Prostate gland (tissue), 2 donors: ENCODE measurements at regions of chr6 and their contacts with region 1.

Region 1: DNA sequence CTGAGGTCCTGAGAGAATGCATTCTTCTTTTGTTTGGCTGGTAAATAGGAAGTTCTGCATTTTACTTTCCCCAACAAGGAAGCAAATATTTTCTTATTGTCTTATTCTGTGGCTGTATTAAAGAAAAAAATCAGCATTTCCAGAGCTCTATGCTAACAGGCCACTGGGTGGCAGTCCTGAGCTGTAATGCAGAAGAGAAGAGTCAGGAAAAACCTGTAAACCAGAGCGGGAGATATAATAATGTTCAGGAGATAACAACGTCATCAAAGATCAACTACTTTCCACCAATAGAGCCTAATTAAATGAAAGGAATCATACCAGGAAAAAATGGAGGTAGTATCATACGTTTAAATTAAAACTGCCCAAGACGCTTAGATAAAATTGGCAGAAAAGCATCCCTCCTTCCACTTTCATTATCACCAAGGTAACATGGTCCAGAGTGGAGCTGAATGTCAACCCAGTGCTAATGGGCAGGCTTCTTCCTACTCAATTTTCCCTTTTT is 55.6 kb upstream of the CARMIL1 start:
- DNase-seq: peak; percentile 42
- H3K4me3 ChIP-seq: no peak overlapping the region
- H3K27ac ChIP-seq: no peak overlapping the region
- H3K4me1 ChIP-seq: no peaks in the 10 kb centered on the region
- H3K27me3 ChIP-seq: no peaks in the 10 kb centered on the region
- CTCF ChIP-seq: peak; percentile 70 to 85 (median 80)
- POLR2A ChIP-seq: no peak

Region 2: GRCh38 chr6:25050356-25050755 is 173.2 kb before region 1 on chr6:
- intact Hi-C with region 1: no loop called
- DNase-seq: no peak
- H3K4me3 ChIP-seq: no peak overlapping the region
- H3K27ac ChIP-seq: no peak overlapping the region
- H3K4me1 ChIP-seq: peaks cover 5% of the 10 kb centered on the region
- H3K27me3 ChIP-seq: no peaks in the 10 kb centered on the region
- CTCF ChIP-seq: no peak
- POLR2A ChIP-seq: no peak

Region 3: DNA sequence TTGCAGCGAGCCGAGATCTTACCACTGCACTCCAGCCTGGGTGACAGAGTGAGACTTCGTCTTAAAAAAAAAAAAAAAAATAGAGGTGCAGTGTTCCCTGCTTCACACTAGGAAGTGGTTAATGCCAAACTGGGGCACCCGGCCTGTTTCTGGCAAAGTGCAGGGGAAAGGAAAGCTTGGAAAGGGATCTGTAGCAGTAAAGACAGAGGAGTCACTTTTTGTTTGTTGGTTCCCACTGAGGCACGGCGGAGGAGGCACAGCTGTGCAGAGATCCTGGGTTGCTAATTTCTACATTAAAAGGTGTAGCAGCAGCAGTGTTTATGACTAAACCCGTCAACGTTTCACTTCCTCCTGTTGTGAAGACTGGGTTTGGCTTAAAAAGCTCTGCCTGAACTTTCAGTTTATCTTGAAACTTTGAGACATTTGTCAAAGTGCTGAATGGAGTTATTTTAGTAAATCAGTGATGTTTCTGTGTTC is 181.2 kb after region 1 on chr6:
- intact Hi-C with region 1: no loop called
- DNase-seq: no peak
- H3K4me3 ChIP-seq: no peak overlapping the region
- H3K27ac ChIP-seq: no peak overlapping the region
- H3K4me1 ChIP-seq: no peaks in the 10 kb centered on the region
- H3K27me3 ChIP-seq: no peaks in the 10 kb centered on the region
- CTCF ChIP-seq: no peak
- POLR2A ChIP-seq: no peak

Region 4: DNA sequence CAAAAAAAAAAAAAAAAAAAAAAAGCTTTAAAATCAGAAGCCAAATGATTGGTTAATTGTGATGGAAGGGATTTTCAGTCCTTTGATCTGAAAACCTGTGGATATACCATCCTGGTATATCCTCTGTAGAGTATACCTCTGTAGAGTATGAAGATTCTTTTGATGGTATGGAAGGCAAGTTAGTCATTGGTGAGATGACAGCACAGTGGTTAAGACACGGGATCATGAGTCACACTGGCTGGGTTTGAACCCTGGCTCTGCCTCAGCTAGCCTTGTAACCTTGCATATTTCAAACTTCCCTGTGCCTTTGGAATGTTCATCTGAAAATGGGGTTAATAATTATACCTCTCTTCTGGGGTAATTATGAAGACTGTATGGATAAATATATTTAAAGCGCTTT is 234.9 kb after region 1 on chr6:
- intact Hi-C with region 1: no loop called
- DNase-seq: no peak
- H3K4me3 ChIP-seq: no peak overlapping the region
- H3K27ac ChIP-seq: no peak overlapping the region
- H3K4me1 ChIP-seq: no peaks in the 10 kb centered on the region
- H3K27me3 ChIP-seq: no peaks in the 10 kb centered on the region
- CTCF ChIP-seq: no peak
- POLR2A ChIP-seq: no peak

Region 5: DNA sequence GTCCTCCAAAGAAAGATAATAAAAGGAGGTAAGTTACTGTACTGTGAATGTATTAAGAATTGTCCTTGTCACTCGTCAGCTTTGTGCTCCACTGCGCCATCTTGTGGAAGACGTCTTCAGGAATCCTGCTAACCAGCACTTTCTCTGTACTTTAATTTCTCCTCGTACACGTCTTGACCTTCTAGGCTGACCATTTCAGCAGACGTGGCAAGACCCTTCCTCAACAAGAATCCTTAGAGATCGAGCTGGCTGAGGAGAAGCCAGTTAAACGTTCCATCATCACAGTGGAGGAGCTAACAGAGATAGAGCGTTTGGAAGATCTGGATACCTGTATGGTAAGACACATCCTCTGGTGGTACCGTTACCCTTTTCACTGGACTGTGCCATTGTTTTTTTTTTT is 333.0 kb after region 1 on chr6:
- intact Hi-C with region 1: loop called (anchors 5 kb)
- DNase-seq: peak; percentile 70
- H3K4me3 ChIP-seq: no peak overlapping the region
- H3K27ac ChIP-seq: no peak overlapping the region
- H3K4me1 ChIP-seq: no peaks in the 10 kb centered on the region
- H3K27me3 ChIP-seq: no peaks in the 10 kb centered on the region
- CTCF ChIP-seq: peak; percentile 39 to 75 (median 64)
- POLR2A ChIP-seq: no peak

Region 6: DNA sequence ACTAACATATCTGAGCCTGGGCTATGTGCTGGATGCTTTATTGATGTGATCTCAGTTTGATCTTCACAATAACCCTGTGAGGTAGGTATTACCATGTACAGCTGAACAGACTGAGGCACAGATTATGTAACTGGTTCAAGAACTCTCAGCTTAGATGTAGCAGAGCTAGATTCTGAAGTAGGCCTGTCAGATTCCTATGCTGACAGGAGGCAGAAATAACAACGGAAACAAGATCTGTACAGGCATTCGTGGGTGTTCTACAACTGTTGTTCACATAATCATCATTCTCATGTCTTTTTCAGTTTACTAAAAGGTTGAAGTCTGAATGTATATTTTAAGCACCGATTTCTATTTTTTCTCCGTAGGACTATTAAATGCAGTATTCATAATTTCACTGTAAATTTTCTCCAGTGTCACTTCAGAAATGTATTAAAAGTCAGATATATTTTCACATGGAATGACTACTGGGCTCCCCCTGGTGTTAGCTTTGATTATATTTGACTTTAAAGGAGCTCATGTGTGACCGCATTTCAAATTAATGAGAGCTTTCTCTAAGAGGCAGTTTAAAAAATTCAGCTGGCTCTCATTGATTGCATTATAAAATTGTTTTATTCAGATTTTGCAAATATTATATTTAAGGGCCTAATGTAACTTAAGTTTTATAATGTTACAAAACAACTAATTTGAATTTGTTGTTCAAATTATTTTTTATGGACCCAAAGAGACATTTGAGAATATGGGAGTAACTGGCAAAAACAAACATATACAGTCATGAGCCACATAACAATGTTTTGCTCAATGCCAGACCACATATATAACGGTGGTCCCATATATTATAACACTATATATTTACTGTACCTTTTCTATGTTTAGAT is 494.6 kb after region 1 on chr6:
- intact Hi-C with region 1: loop called (anchors 5 kb)
- DNase-seq: peak; percentile 11
- H3K4me3 ChIP-seq: no peak overlapping the region
- H3K27ac ChIP-seq: no peak overlapping the region
- H3K4me1 ChIP-seq: no peaks in the 10 kb centered on the region
- H3K27me3 ChIP-seq: no peaks in the 10 kb centered on the region
- CTCF ChIP-seq: peak in 3 of 4 experiments; percentile 49 to 72 (median 62)
- POLR2A ChIP-seq: no peak

Region 7: GRCh38 chr6:25889877-25890853 is 666.6 kb after region 1 on chr6:
- intact Hi-C with region 1: loop called (anchors 10 kb)
- DNase-seq: peak; percentile 42
- H3K4me3 ChIP-seq: no peak overlapping the region
- H3K27ac ChIP-seq: no peak overlapping the region
- H3K4me1 ChIP-seq: no peaks in the 10 kb centered on the region
- H3K27me3 ChIP-seq: no peaks in the 10 kb centered on the region
- CTCF ChIP-seq: peak in 3 of 4 experiments; percentile 42 to 67 (median 53)
- POLR2A ChIP-seq: no peak